ENCODE measurements at regions of chr12 and their contacts with region 1.

Region 1: DNA sequence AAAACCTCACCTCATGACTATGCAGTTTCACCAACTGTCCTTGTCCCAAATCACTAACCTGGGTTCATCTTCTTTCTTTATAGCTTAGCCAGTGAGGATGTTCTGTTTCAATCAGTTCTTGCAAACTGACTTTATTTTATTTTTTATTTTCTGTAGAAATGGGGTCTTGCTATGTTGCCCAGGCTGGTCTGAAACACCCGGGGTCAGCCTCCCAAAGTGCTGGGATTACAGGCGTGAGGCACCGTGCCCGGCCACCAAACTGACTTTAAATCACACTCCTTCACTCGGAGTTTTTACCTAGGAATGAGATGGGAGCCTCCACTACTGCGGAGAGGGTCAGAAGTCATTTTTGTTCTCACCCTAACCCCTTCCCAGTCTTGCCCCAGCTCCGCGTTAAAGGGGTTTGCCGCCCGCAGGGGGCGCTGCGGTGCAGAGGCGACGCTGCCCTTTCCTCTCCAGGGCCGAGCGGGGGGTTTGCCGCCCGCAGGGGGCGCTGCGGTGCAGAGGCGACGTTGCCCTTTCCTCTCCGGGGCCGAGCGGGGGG is 7.0 kb upstream of the B4GALNT3 start:
- DNase-seq: peak; percentile 71
- H3K4me3 ChIP-seq: no peak overlapping the region
- H3K27ac ChIP-seq: no peak overlapping the region
- H3K4me1 ChIP-seq: no peaks in the 10 kb centered on the region
- H3K27me3 ChIP-seq: no peaks in the 10 kb centered on the region
- CTCF ChIP-seq: no peak

Region 2: GRCh38 chr12:546921-547845 is 94.4 kb after region 1 on chr12:
- intact Hi-C with region 1: loop called (anchors 5 kb)
- DNase-seq: peak; percentile 73
- H3K4me3 ChIP-seq: no peak overlapping the region
- H3K27ac ChIP-seq: no peak overlapping the region
- H3K4me1 ChIP-seq: no peaks in the 10 kb centered on the region
- H3K27me3 ChIP-seq: no peaks in the 10 kb centered on the region
- CTCF ChIP-seq: peak; percentile 99

Region 3: GRCh38 chr12:569803-570434 is 117.2 kb after region 1 on chr12:
- intact Hi-C with region 1: no loop called
- DNase-seq: peak; percentile 93
- H3K4me3 ChIP-seq: peak overlapping the region; percentile 55
- H3K27ac ChIP-seq: peak overlapping the region; percentile 95
- H3K4me1 ChIP-seq: peaks cover 5% of the 10 kb centered on the region
- H3K27me3 ChIP-seq: no peaks in the 10 kb centered on the region
- CTCF ChIP-seq: peak; percentile 97